Pancreas (tissue), 10 donors: ENCODE measurements at regions of chr19 and their contacts with region 1.

Region 1: DNA sequence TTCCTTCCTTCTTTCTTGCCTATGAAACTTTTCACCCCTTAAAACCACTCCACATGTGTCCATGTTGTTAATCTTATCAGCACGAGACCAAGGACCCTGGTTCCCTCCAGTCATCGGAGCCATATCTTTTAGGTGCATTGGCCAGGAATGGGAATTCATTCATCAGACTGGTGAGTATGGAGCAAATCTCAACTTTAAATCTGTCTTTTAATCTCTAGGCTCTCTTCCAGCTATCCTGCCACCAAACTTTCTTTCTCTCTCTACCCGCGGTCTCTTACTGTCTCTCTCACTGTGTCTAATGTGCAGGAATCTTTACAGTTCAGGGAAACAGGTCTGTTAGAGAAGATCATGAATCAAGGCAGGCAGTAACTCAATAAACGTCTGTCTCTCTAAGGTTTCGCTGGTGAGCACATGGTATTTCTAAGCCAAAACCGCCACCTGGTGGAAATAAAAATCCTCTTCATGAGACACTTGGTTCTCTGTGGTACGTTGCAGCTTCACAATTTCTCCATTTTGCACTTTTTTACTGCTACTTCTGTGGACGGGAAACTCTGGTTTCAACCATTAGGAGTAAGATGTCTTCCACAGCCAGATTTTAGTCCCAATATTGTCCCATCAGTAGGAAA is 16.1 kb downstream of the LGALS16 start:
- DNase-seq: peak in 1 of 6 donors; percentile 40
- ATAC-seq: peak; percentile 63 to 93 (median 88)
- H3K4me3 ChIP-seq: no peak overlapping the region
- H3K27ac ChIP-seq: no peak overlapping the region
- H3K4me1 ChIP-seq: no peaks in the 10 kb centered on the region
- H3K27me3 ChIP-seq: no peaks in the 10 kb centered on the region
- CTCF ChIP-seq: peak in 3 of 4 donors; percentile 28 to 51 (median 44)

Region 2: DNA sequence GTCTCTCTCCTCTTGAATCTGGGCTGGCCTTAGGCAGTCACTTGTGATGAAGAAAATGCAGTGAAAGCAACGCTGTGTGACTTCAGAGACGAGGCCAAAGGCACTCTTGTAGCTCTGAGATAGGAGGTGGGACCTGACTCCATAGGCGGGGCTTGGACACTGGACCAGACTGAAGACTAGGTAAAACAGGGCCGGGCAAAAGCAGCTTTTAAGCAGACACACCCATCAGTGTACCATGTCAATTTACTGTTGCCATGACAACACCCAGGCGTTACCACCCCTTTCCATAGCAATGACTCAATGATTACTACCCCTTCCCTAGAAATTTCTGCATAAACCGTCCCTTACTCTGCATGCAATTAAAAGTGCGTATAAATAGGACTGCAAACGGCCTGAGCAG is 125.3 kb before region 1 on chr19:
- intact Hi-C with region 1: loop called in 1 of 3 experiments (anchors 5 kb)
- DNase-seq: no peak
- ATAC-seq: no peak
- H3K4me3 ChIP-seq: no peak overlapping the region
- H3K27ac ChIP-seq: no peak overlapping the region
- H3K4me1 ChIP-seq: no peaks in the 10 kb centered on the region
- H3K27me3 ChIP-seq: no peaks in the 10 kb centered on the region
- CTCF ChIP-seq: no peak

Region 3: DNA sequence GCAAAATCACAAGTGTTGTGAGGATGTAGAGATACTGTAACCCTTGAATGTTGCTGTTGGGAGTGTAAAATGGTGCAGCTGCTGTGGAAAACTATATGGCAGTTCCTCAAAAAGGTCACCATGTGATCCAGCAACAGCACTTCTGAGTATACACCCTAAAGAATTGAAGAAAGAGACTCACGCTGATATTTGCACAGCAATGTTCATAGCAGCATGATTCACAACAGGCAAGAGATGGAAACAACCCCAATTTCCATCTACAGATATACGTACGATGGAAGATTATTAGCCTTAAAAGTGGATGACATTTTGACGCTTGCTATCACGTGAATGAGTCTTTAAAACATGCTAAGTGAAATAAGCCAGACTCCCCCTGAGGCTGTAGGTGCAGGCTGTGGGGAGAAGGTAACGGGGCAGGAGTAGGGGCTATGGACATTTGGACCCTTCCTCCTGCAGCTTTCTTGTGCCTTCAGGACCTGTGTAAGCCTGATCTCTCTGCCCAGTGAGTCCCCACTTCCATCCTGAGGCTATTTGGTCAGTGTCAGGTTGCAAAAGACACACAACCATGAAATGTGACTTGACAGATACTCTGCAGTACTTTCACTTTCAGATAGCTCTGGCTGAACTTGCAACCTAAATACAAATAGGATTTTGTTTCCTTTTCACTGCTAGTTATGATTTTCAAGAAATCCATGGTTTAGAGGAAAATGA is 114.3 kb before region 1 on chr19:
- intact Hi-C with region 1: loop called in 1 of 3 experiments (anchors 5 kb)
- DNase-seq: no peak
- ATAC-seq: peak in 3 of 4 donors; percentile 48 to 89 (median 74)
- H3K4me3 ChIP-seq: no peak overlapping the region
- H3K27ac ChIP-seq: no peak overlapping the region
- H3K4me1 ChIP-seq: no peaks in the 10 kb centered on the region
- H3K27me3 ChIP-seq: no peaks in the 10 kb centered on the region
- CTCF ChIP-seq: no peak

Region 4: DNA sequence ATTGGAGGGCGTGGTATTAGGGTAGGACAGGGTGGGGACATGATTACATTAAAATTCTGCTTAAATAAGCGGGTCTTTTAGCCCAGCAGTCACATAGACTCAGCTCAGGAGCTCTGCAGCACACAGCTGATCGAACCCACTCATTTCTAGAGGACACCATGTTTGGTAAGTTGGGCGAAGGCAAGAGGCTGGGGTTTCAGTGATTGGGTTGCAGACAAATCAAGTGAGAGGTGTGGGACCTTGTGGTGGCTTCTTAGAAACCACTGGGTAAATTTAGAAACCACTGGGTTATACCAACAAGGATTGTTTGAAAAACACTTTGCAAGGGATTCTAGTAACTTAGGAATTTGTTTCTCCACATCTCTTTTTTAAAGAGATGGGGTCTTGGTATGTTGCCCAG is 106.9 kb after region 1 on chr19 and contains the start of gene LEUTX:
- intact Hi-C with region 1: no loop called
- DNase-seq: no peak
- ATAC-seq: no peak
- H3K4me3 ChIP-seq: no peak within 1 kb of the TSS
- H3K27ac ChIP-seq: no peak within 1 kb of the TSS
- H3K4me1 ChIP-seq: no peaks in the 10 kb centered on the region
- H3K27me3 ChIP-seq: peaks cover 0 to 3% (median 0%) of the 10 kb centered on the region in 4 donors
- CTCF ChIP-seq: no peak
- total RNA-seq, gene LEUTX: not detected